ENCODE measurements at regions of chr1 and their contacts with region 1.

Region 1: DNA sequence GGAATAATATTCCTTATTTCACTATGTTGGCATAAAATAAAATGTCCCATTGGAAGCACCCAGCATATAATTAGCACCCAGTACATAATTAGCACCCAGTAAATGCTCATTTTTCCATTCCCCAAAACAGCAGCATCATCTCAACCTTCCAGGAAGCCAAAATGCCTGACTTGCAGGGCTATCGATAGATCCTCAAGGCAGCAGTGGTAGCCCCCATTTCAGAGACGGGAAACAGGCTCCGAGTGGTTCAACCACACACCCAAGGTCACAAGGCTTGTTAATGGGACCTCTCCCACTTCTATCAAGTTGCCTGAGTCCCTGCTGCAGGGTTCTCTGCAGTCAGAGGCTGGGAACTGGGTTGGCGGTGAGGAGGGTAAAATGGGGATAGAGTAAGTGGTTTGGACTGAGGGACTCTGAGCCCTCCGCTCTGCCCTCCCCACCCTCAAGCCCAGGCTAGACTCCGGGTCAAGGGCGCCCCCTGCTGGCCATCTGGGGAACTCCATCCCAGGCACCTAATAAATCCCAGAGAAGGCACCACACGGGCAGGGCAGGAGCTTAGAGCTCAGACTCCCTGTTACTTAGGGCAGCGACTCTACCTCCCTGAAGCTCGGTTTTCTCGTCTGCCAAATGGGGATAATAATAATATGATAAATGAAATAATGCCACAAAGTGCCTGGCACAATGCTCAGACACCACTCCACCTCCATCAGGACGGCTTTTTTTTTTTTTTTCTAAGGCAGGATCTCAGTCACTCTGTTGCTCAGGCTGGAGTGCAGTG is 21.9 kb upstream of the LAPTM5 start:
- DNase-seq: peak; percentile 84
- H3K4me3 Mint-ChIP-seq: no peak overlapping the region
- H3K27ac Mint-ChIP-seq: no peak overlapping the region
- H3K4me1 Mint-ChIP-seq: peaks cover 18% of the 10 kb centered on the region
- H3K27me3 Mint-ChIP-seq: no peaks in the 10 kb centered on the region

Region 2: DNA sequence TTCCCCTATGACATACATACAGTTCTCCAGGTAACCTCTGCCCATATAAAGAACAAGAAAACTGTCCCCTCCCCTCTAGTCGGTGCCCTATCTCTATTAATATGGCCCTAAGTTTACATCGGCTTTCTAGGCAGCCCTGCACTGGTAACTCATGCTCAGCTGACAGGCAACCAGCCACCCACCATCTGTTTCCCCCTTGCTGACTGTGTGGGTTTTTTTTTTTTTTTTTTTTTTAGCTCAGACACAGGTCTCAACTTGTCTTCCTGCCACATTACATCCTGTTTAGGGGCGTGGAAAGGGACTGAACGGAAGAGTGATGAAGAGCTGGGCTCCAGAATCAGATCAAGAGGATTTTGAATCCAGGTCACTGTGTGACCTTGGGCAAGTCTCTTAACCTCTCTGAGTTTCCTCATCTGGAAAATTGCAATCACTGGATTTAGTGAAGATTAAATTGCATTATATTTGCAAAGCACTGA is 35.9 kb before region 1 on chr1:
- intact Hi-C with region 1: loop called (anchors 1 kb)
- DNase-seq: peak; percentile 70
- H3K4me3 Mint-ChIP-seq: peak overlapping the region; percentile 49
- H3K27ac Mint-ChIP-seq: peak overlapping the region; percentile 84
- H3K4me1 Mint-ChIP-seq: peaks cover 89% of the 10 kb centered on the region
- H3K27me3 Mint-ChIP-seq: no peaks in the 10 kb centered on the region

Region 3: GRCh38 chr1:30756545-30757195 is 22.8 kb before region 1 on chr1:
- intact Hi-C with region 1: loop called (anchors 2 kb)
- DNase-seq: peak; percentile 66
- H3K4me3 Mint-ChIP-seq: peak overlapping the region; percentile 97
- H3K27ac Mint-ChIP-seq: peak overlapping the region; percentile 96
- H3K4me1 Mint-ChIP-seq: peaks cover 79% of the 10 kb centered on the region
- H3K27me3 Mint-ChIP-seq: no peaks in the 10 kb centered on the region

Region 4: DNA sequence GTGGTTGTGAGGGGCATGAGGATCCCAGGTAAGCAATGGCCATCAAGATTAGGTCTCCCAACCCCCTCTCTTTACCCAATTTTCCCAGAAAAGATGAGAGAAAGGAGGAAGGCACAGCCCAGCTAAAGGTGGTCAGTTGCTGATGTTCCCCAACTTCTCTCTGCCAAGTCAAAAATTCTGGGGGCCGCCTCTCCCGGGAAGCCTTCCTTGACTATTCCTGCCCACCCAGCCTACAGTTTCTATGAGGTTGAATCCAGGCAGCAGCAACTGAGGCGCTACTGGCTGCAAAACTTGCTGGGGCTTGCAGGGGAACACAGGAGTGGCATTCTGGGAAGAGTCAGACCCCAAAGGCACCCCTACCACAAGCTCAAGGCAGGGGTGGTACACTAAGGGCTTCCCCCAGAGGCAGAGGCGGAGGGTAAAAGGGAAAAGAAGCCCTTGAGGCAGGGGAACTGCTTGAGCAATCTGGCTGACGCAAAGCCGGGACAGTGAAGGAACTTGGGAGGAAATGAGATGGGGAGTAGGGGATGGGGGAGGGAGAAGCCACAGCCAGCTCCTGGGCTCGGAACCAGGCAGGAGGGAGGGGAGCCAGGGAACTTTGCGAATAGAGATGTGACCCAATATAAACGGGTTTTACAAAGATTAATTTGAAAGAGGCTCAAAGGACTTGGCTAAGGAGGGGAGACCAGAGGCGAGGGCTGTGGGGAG is 97.9 kb after region 1 on chr1:
- intact Hi-C with region 1: no loop called
- DNase-seq: no peak
- H3K4me3 Mint-ChIP-seq: no peak overlapping the region
- H3K27ac Mint-ChIP-seq: no peak overlapping the region
- H3K4me1 Mint-ChIP-seq: no peaks in the 10 kb centered on the region
- H3K27me3 Mint-ChIP-seq: peaks cover 15% of the 10 kb centered on the region

Region 5: DNA sequence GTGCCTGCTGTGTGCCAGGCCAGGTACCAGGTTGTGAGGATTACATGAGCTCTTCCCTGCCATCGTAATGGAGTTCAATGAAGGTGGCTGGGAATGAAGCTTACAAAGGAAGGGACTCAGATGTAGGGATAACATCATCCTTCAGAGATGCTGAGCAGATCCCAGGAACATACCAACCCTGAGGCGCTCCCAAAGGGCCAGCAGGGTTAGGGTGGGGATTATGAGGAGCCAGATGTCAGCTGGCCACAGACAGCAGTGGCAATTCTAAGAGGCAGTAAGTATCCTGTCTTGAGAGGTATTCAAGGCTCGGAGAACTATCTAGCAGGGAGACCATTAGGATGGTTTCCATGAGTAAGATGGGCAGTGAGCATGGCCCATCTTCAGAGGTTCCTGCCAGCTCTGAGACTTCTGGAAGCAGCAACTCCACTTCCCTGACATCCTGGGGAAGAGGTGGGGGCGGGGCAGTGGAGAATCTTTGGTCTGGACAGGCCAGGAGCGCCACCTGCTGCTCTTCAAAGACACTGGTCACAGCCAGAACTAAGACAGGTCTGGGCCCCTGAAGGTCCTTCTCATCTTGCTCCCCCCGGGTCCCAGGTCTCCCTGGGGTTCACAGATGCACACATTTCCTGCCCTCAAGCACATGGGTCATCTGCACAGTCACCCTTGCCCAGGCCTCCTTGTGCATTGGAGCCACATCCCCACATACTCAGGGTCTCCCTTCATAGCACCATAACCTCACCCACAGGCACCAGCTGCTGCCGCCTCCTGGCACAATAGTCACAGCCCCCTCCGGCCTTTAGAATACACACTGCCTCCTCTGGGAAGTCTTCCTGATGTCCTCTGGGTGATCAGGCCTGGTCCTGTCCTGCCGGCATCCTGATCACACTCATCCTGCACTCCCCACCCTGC is 131.8 kb after region 1 on chr1:
- intact Hi-C with region 1: loop called (anchors 5 kb)
- DNase-seq: peak; percentile 36
- H3K4me3 Mint-ChIP-seq: no peak overlapping the region
- H3K27ac Mint-ChIP-seq: no peak overlapping the region
- H3K4me1 Mint-ChIP-seq: peaks cover 11% of the 10 kb centered on the region
- H3K27me3 Mint-ChIP-seq: peaks cover 30% of the 10 kb centered on the region

Region 6: GRCh38 chr1:31762726-31763670 is 983.5 kb after region 1 on chr1:
- intact Hi-C with region 1: no loop called
- DNase-seq: peak; percentile 54
- H3K4me3 Mint-ChIP-seq: peak overlapping the region; percentile 81
- H3K27ac Mint-ChIP-seq: peak overlapping the region; percentile 8
- H3K4me1 Mint-ChIP-seq: peaks cover 13% of the 10 kb centered on the region
- H3K27me3 Mint-ChIP-seq: peaks cover 55% of the 10 kb centered on the region

Measured in activated T-helper 2 cell treated with anti-CD3 and anti-CD28 coated beads, Interferon-gamma antibody, Interleukin-2, Interleukin-4, amounts not matched to agents 10 μg/mL and 5 μg/mL and 100 μg/mL, durations not matched to agents 14 hours and 24 hours and 36 hours (primary cell).